Left ventricle myocardium superior (tissue), 1 donor: ENCODE measurements at regions of chr16 and their contacts with region 1.

Region 1: GRCh38 chr16:78235168-78235800 is 135.8 kb downstream of the WWOX start:
- DNase-seq: peak; percentile 75
- ATAC-seq: peak; percentile 52

Region 2: DNA sequence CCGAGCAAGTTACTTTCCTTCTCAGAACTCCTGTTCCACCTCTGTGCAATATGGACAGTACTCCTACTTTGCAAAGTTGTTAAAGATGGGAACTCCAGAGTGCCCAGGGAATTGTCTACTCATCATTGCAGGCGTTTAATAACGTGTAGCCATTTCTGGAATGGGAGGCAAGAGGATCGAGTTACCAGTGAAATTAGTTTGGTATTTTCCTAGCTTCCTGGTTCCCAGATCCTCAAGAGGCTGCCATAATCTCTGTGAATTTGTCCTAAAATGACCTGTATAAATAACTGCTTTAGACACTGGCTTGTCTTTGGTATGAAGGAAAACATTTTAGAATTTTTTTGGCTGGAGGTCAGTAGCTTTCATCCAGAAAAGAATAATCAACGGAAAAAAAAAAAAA is 108.2 kb before region 1 on chr16:
- intact Hi-C with region 1: loop called (anchors 5 kb)
- DNase-seq: no peak
- ATAC-seq: peak; percentile 69

Region 3: DNA sequence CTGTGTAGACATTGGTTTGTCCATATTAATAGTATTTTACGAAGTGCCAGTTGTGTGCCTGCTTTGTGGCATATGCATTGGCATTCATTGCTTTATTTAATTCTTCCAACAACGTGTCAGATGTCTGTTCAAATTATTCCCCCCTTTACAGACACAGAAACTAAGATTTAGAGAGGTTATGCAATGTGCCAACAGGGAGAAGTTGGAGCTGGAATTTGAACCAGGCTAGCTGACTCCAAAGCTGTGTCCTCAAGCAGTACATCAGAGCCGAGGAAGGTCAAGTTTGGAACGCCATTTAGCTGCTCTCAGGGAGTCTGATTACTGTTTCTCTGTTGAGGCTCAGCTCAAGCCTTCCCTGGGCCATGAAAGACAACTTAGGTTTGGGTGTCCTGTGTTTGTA is 96.4 kb after region 1 on chr16:
- intact Hi-C with region 1: no loop called
- DNase-seq: no peak
- ATAC-seq: no peak